ENCODE measurements at regions of chr17 and their contacts with region 1.

Region 1: DNA sequence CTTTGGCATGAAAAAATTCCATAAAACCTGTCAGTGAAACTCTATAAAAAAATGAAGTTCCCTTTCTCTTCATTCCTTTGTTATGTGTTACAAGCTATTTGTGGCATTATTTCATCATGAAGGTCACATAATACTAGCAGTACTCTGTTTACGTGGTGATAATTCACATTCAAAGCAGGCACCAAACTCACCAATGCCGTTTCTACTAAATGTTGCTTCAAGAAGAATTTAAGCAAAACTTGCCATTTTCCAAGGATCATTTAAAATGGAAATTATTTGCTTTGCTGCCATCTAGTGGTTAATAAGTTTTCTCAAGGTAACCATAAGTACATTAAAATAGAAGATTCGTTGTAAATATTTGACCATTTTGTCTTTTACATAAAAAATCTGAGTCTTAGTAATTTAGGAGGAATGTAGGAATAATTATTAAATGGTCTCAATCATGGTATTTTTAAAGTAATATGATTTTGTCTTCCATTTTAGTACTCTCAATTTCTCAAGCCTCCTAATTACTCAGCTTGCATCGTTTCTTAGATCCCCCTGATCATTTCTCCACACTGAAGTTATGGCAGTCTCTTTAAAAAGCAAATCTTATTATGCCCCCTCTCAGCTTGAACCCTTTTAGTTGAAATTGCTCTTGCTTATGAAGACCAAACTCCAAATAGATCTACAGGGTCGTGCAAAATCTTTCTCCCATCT is 80.8 kb downstream of the OMG start:
- DNase-seq: peak; percentile 58
- H3K4me3 ChIP-seq: no peak overlapping the region
- H3K27ac ChIP-seq: no peak overlapping the region
- H3K4me1 ChIP-seq: no peaks in the 10 kb centered on the region
- H3K27me3 ChIP-seq: no peaks in the 10 kb centered on the region
- CTCF ChIP-seq: peak; percentile 51

Region 2: GRCh38 chr17:31015639-31016038 is 200.6 kb before region 1 on chr17:
- CTCF ChIA-PET with region 1: no interaction called
- POLR2A ChIA-PET with region 1: no interaction called
- intact Hi-C with region 1: loop called (anchors 5 kb)
- DNase-seq: no peak
- H3K4me3 ChIP-seq: no peak overlapping the region
- H3K27ac ChIP-seq: no peak overlapping the region
- H3K4me1 ChIP-seq: no peaks in the 10 kb centered on the region
- H3K27me3 ChIP-seq: no peaks in the 10 kb centered on the region
- CTCF ChIP-seq: no peak

Region 3: GRCh38 chr17:31373150-31374093 is 157.2 kb after region 1 on chr17:
- CTCF ChIA-PET with region 1: no interaction called
- POLR2A ChIA-PET with region 1: no interaction called
- intact Hi-C with region 1: loop called (anchors 5 kb)
- DNase-seq: peak; percentile 52
- H3K4me3 ChIP-seq: no peak overlapping the region
- H3K27ac ChIP-seq: no peak overlapping the region
- H3K4me1 ChIP-seq: peaks cover 9% of the 10 kb centered on the region
- H3K27me3 ChIP-seq: no peaks in the 10 kb centered on the region
- CTCF ChIP-seq: peak; percentile 48

Region 4: GRCh38 chr17:31549525-31550388 is 333.6 kb after region 1 on chr17:
- CTCF ChIA-PET with region 1: no interaction called
- POLR2A ChIA-PET with region 1: no interaction called
- intact Hi-C with region 1: no loop called
- DNase-seq: peak; percentile 89
- H3K4me3 ChIP-seq: peak overlapping the region; percentile 74
- H3K27ac ChIP-seq: peak overlapping the region; percentile 37
- H3K4me1 ChIP-seq: no peaks in the 10 kb centered on the region
- H3K27me3 ChIP-seq: no peaks in the 10 kb centered on the region
- CTCF ChIP-seq: no peak

Measured in A673 (cell line).